ENCODE measurements at regions of chr12 and their contacts with region 1.

Region 1: DNA sequence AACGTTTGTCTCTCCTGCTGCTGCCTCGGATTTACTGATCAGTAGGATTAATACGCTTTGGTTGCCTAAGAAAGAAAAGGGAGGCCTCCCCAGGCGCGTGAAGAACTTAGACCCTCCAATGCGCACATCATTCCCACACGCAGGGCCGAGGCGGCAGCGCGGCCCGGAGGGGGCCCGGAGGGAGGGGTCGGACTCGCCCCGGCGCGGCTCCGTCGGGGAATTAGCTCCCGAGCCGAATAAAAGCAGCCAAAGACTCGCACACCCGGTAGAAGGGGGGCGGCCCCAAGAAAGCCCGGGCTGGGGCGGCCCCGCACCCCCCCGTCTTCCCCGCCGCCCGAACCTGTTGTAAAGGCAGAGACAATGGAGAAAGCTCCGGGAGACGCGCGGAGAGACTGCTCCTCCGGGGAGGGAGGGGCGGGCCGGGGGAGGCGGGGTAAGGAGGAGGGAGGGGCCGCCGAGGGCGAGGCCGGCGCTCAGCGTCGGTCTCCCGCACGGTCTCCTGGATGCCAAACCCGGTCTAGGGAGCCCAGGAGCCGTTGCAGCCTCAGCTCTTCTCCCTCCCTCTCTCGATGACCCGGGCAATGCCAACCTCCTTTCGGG is at the start of gene NELL2:
- DNase-seq: peak; percentile 83
- H3K4me3 Mint-ChIP-seq: peak within 1 kb of the TSS; percentile 99
- H3K27ac Mint-ChIP-seq: peak within 1 kb of the TSS; percentile 61
- H3K4me1 Mint-ChIP-seq: peaks cover 29% of the 10 kb centered on the region
- H3K27me3 Mint-ChIP-seq: peaks cover 14% of the 10 kb centered on the region
- total RNA-seq, gene NELL2: 40.5 to 43.5 TPM

Region 2: GRCh38 chr12:44015335-44015941 is 860.6 kb before region 1 on chr12:
- CTCF ChIA-PET with region 1: interaction called, 3 read pairs
- POLR2A ChIA-PET with region 1: no interaction called
- intact Hi-C with region 1: loop called (anchors 5 kb)
- DNase-seq: no peak
- H3K4me3 Mint-ChIP-seq: no peak overlapping the region
- H3K27ac Mint-ChIP-seq: no peak overlapping the region
- H3K4me1 Mint-ChIP-seq: no peaks in the 10 kb centered on the region
- H3K27me3 Mint-ChIP-seq: no peaks in the 10 kb centered on the region

Region 3: GRCh38 chr12:44759289-44759688 is 116.8 kb before region 1 on chr12:
- CTCF ChIA-PET with region 1: no interaction called
- POLR2A ChIA-PET with region 1: no interaction called
- intact Hi-C with region 1: no loop called
- DNase-seq: no peak
- H3K4me3 Mint-ChIP-seq: no peak overlapping the region
- H3K27ac Mint-ChIP-seq: no peak overlapping the region
- H3K4me1 Mint-ChIP-seq: peaks cover 15% of the 10 kb centered on the region
- H3K27me3 Mint-ChIP-seq: no peaks in the 10 kb centered on the region

Region 4: DNA sequence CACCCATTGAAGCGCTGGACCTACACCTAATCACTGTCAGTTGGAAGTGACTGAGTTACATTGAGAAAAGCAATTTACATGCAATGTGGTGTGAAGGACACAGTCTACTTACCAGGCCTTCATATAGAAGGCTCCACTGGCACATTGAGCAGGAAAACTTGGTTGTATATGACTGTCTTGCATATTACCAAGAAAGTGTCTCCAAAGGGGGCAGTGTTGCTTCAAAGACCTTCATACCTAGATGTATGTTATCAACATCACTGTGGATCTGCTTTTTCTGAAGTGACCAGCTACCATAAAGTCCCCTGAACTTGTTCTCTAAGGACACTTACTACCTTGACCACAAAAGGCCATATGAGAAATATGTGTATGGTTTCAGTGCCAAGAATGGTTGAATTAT is 64.0 kb before region 1 on chr12:
- CTCF ChIA-PET with region 1: interaction called, 163 read pairs
- POLR2A ChIA-PET with region 1: no interaction called
- intact Hi-C with region 1: loop called (anchors 1 kb)
- DNase-seq: no peak
- H3K4me3 Mint-ChIP-seq: no peak overlapping the region
- H3K27ac Mint-ChIP-seq: no peak overlapping the region
- H3K4me1 Mint-ChIP-seq: peaks cover 35% of the 10 kb centered on the region
- H3K27me3 Mint-ChIP-seq: no peaks in the 10 kb centered on the region

Region 5: DNA sequence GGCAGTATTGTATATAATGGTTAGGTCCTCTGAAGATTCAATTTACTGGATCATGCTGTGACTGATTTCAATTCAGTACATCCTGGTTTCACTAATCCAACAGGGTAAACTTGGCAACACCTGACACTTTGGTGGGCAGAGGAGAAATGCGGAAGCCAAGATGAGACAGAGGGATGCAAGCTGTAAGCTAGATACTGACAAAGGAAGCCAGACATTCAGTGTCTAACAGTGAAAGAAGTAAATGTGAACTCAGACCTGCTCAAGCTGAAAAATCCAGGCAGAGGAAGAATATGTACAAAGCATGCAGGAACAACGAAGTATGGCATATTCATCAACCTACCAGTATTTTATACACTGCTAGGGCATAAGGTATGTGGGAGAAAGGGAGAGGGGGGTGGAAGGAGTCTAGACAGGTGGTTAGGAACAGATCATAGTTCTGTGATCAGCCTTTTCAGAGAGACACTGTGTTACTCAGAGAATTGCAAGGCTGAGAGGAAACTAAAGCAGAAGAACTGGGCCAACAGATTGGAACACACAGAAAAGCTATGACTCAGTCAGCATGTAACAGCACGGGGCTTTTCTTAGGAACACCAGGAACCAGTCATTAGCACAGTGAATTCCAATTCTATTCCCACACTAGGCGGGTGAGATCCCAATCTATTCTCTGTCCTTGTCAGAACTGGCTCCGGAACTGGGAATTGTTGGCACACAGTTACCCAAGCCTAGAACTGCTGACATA is 40.2 kb before region 1 on chr12:
- CTCF ChIA-PET with region 1: interaction called, 29 read pairs
- POLR2A ChIA-PET with region 1: no interaction called
- intact Hi-C with region 1: loop called (anchors 2 kb)
- DNase-seq: no peak
- H3K4me3 Mint-ChIP-seq: peak overlapping the region; percentile 6
- H3K27ac Mint-ChIP-seq: peak overlapping the region; percentile 89
- H3K4me1 Mint-ChIP-seq: peaks cover 88% of the 10 kb centered on the region
- H3K27me3 Mint-ChIP-seq: no peaks in the 10 kb centered on the region

Region 6: GRCh38 chr12:44921736-44922135 is 45.7 kb after region 1 on chr12:
- CTCF ChIA-PET with region 1: no interaction called
- POLR2A ChIA-PET with region 1: no interaction called
- intact Hi-C with region 1: loop called (anchors 5 kb)
- DNase-seq: no peak
- H3K4me3 Mint-ChIP-seq: no peak overlapping the region
- H3K27ac Mint-ChIP-seq: no peak overlapping the region
- H3K4me1 Mint-ChIP-seq: no peaks in the 10 kb centered on the region
- H3K27me3 Mint-ChIP-seq: no peaks in the 10 kb centered on the region

Region 7: DNA sequence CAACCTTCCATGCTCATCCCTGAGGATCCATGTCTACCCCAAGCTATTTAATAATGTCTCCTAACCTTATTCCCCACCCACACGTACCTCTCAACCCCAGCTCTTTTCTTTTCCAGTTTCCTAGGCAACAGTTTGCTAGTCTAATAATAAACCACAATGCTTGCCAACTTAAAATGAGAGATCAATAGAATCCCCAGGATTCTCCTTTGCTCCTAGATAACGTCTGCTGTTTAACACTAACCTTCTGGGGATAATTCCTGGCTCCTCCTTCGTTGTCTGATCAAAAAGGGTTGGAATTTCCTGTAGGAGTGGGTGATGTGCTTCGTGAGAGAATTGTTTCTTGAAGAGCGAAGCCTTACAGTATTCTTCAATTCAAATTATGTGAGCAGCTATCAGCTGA is 217.0 kb after region 1 on chr12:
- CTCF ChIA-PET with region 1: no interaction called
- POLR2A ChIA-PET with region 1: no interaction called
- intact Hi-C with region 1: no loop called
- DNase-seq: no peak
- H3K4me3 Mint-ChIP-seq: no peak overlapping the region
- H3K27ac Mint-ChIP-seq: no peak overlapping the region
- H3K4me1 Mint-ChIP-seq: no peaks in the 10 kb centered on the region
- H3K27me3 Mint-ChIP-seq: peaks cover 11% of the 10 kb centered on the region